ENCODE measurements at regions of chr10 and their contacts with region 1.

Region 1: DNA sequence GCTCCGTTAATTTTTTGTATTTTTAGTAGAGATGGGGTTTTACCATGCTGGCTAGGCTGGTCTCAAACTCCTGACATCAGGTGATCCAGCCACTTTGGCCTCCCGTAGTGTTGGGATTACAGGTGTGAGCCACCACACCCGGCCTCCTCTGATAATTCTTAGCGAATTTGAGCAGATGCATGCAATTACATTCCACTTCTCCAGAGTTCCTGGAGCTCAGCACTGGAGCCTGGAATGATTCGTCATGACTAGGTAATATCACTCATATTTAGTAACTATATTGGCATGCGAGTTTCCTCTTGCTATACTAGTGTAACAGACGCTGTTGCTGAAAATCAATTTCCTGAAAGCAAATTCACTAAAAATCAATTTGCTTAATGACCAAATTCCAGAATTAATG is 86.8 kb downstream of the MKX start:
- DNase-seq: no peak
- ATAC-seq: no peak

Region 2: GRCh38 chr10:27446091-27446918 is 212.5 kb before region 1 on chr10:
- intact Hi-C with region 1: loop called (anchors 10 kb)
- DNase-seq: no peak
- ATAC-seq: peak; percentile 52

Region 3: DNA sequence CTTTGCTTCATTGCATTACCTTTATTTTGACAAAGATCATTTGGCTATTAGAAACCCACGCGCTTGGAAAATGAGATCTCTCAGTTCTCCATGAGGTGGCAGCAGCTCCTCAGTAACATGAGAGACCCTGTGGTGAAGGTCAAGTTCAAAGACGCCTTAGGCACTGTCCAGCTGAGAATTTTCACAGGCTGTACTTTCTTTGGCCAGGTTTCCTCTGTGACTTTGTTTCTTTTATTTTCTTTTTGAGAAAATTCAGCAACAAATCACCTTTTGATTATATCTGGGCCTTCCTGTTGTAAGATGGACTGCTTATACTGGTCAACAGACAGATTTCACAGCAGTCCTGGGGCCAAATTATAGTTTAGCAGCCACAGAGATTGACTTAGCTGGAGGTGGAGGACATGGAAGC is 100.2 kb before region 1 on chr10:
- intact Hi-C with region 1: loop called (anchors 5 kb)
- DNase-seq: no peak
- ATAC-seq: peak; percentile 94

Region 4: DNA sequence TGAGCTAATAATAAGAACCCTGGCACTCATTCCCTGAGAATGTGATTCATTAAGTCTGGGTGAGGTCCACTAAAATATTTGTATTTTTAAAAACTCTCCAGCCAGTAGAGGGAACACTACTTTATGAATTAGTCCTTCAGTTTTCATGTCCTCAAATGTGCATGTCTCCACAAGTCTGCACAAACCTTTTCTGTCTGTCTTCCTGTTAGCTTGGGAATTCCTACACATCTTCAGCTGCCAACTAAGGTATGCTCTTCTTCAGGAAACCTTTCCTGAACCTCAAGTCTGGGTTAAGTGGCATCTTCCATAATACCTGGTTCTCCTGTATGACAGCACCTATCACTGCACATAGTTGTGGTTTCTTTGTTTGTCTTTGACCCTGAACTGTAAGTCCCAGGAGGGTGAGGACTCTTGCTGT is 206.4 kb after region 1 on chr10:
- intact Hi-C with region 1: no loop called
- DNase-seq: no peak
- ATAC-seq: no peak

Measured in Right ventricle myocardium superior (tissue), 1 donor.